Caco-2 (cell line): ENCODE measurements at regions of chr11 and their contacts with region 1.

Region 1: DNA sequence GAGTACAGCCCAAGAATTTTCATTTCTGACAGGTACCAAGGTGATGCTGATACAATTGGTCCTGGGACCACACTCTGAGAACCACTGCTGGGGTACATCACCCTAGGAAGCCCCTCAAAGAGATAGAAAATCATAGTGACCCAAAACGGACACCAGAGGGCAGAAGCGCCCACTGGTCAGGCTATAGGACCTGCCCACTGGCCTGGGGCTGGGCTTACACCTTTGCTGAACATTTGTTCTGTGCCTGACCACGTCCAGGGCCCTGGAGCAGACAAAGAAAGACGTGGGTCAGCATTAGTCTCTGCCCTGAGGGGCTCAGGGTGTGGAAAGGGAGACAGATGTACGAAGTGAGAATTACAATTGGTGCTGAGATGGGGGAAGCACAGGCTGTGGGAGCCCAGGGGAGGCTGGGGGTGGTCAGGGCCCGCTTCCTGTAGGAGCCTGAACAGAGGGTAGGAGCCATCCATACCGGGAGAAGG is 14.4 kb upstream of the SERPINH1 start:
- DNase-seq: peak; percentile 89 to 90
- H3K4me3 ChIP-seq: no peak overlapping the region
- H3K4me3 Mint-ChIP-seq: no peak overlapping the region
- H3K27ac Mint-ChIP-seq: peak overlapping the region; percentile 82
- H3K4me1 ChIP-seq: peaks cover 7% of the 10 kb centered on the region
- H3K4me1 Mint-ChIP-seq: peaks cover 16% of the 10 kb centered on the region
- H3K27me3 ChIP-seq: no peaks in the 10 kb centered on the region
- H3K27me3 Mint-ChIP-seq: no peaks in the 10 kb centered on the region
- CTCF ChIP-seq: peak; percentile 96 to 99

Region 2: DNA sequence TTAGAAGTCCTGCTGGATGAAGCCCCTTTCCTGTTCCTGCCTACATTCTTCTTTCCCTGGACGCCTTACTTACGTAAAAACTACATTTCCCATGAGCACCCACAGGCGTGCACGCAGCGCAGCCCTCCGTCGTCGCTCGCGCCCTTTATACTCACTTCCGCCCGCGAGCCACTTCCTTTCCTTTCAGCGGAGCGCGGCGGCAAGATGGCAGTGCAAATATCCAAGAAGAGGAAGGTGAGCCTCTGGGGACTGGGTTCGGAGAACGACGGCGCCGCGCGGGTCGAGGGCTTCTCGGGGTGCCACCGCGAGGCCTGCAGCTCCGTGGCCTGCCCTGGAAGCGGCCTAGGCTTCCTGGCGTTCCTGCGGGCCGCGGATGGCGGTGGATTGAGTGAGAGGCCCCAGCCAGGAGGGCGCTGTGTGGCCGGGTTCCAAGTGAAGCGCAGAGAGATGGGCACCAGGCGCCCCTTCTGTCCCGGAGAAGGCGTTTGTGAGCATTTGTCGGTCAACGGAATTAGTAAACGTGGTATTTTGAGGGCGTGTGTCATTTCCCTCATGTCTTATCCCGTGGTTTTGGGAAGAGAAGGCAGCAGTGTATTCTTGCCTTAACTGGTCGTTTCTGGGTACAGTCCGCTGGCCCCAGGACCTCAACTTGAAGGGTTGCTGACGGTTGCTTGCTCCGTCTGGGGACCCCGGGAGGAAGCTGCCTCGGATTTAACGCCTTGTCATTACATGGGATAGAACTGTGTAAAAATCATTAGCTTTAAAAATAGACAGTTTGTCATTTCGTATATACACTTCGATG is 148.1 kb before region 1 on chr11 and contains the start of gene RPS3:
- CTCF ChIA-PET with region 1: no interaction called
- POLR2A ChIA-PET with region 1: no interaction called
- intact Hi-C with region 1: no loop called
- DNase-seq: peak; percentile 95 to 97
- H3K4me3 ChIP-seq: peak within 1 kb of the TSS; percentile 80
- H3K4me3 Mint-ChIP-seq: peak within 1 kb of the TSS; percentile 99
- H3K27ac Mint-ChIP-seq: peak within 1 kb of the TSS; percentile 100
- H3K4me1 ChIP-seq: peaks cover 35% of the 10 kb centered on the region
- H3K4me1 Mint-ChIP-seq: peaks cover 40% of the 10 kb centered on the region
- H3K27me3 ChIP-seq: no peaks in the 10 kb centered on the region
- H3K27me3 Mint-ChIP-seq: no peaks in the 10 kb centered on the region
- CTCF ChIP-seq: peak in 1 of 2 experiments; percentile 60
- total RNA-seq, gene RPS3: 6,280 and 6,333 TPM in 2 replicates

Region 3: GRCh38 chr11:75562048-75562835 is 14.6 kb after region 1 on chr11 and contains the start of gene SERPINH1:
- CTCF ChIA-PET with region 1: interaction called, 4 read pairs
- POLR2A ChIA-PET with region 1: interaction called, 4 read pairs
- intact Hi-C with region 1: loop called (anchors 1 kb)
- DNase-seq: peak; percentile 92
- H3K4me3 ChIP-seq: peak within 1 kb of the TSS; percentile 51
- H3K4me3 Mint-ChIP-seq: peak within 1 kb of the TSS; percentile 93
- H3K27ac Mint-ChIP-seq: peak within 1 kb of the TSS; percentile 95
- H3K4me1 ChIP-seq: peaks cover 71% of the 10 kb centered on the region
- H3K4me1 Mint-ChIP-seq: peaks cover 44% of the 10 kb centered on the region
- H3K27me3 ChIP-seq: no peaks in the 10 kb centered on the region
- H3K27me3 Mint-ChIP-seq: no peaks in the 10 kb centered on the region
- CTCF ChIP-seq: no peak
- total RNA-seq, gene SERPINH1: 481 and 528 TPM in 2 replicates

Region 4: DNA sequence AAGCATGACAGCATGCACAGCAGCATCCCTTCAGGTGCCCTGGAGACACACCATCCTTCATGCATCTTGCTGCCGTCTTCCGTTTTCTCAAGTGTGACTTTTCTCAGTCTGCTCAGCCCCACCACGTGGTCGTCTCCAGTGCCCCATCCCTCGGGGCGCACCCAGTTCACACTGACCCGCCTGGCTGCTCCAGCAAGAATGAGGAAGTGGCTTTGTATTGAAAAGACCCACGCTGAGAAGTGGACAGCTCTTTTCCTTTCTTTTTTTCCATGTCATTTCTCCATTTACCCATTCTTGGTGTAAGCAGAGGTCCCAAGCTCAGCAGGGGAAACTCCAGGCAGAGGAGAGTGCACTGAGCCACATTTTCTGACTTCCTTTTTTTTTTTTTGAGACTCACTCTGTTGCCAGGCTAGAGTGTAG is 28.9 kb after region 1 on chr11:
- CTCF ChIA-PET with region 1: interaction called, 5 read pairs
- POLR2A ChIA-PET with region 1: no interaction called
- intact Hi-C with region 1: loop called (anchors 1 kb)
- DNase-seq: peak; percentile 81 to 89
- H3K4me3 ChIP-seq: no peak overlapping the region
- H3K4me3 Mint-ChIP-seq: peak overlapping the region; percentile 6
- H3K27ac Mint-ChIP-seq: peak overlapping the region; percentile 57
- H3K4me1 ChIP-seq: peaks cover 10% of the 10 kb centered on the region
- H3K4me1 Mint-ChIP-seq: peaks cover 15% of the 10 kb centered on the region
- H3K27me3 ChIP-seq: no peaks in the 10 kb centered on the region
- H3K27me3 Mint-ChIP-seq: no peaks in the 10 kb centered on the region
- CTCF ChIP-seq: no peak

Region 5: GRCh38 chr11:75642402-75643113 is 94.9 kb after region 1 on chr11:
- CTCF ChIA-PET with region 1: no interaction called
- POLR2A ChIA-PET with region 1: no interaction called
- intact Hi-C with region 1: loop called (anchors 5 kb)
- DNase-seq: no peak
- H3K4me3 ChIP-seq: no peak overlapping the region
- H3K4me3 Mint-ChIP-seq: no peak overlapping the region
- H3K27ac Mint-ChIP-seq: no peak overlapping the region
- H3K4me1 ChIP-seq: peaks cover 62% of the 10 kb centered on the region
- H3K4me1 Mint-ChIP-seq: peaks cover 48% of the 10 kb centered on the region
- H3K27me3 ChIP-seq: no peaks in the 10 kb centered on the region
- H3K27me3 Mint-ChIP-seq: no peaks in the 10 kb centered on the region
- CTCF ChIP-seq: no peak

Region 6: DNA sequence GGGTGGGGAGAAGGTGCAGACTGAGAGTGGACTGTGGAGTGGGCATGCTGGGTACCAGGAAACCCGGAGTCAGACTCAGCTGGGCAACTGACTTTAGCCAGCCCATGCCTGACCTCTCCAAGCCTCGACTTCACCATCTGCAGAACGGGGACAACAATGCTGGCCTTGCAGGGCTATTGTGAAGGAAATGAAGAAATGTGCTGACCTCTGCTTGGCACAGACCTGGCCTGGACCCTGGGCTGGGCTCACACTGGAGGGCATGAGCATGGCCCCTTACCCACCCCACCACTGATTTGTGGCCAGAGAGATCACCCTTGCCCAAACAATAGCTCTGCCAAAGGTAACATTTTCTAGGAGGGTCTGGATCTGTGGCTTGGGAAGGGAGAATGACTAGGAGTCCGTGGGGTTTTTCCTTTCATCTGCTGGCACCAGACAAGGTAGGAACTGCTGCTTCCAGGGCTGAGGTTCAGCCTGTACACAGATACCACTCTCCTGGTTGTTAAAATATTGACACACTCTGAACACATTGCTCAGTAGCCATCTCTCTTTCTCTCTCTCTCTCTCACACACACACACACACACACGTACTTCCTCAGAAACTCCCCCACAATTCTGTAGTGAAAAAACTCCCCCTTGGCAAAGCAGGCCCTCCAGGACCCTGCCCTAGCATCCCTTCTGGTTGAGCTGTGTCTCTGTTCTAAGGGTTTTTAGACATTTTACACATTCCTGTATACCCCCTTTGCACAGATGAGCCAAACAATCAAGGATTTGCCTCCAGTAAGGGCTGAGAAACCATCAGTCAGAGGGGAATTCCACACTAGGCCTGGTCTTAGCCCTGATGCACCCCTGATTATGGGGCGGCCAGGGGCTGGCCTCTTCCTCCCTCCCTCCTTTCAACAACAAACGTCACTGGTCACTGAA is 171.1 kb after region 1 on chr11:
- CTCF ChIA-PET with region 1: no interaction called
- POLR2A ChIA-PET with region 1: no interaction called
- intact Hi-C with region 1: loop called (anchors 1 kb)
- DNase-seq: no peak
- H3K4me3 ChIP-seq: no peak overlapping the region
- H3K4me3 Mint-ChIP-seq: no peak overlapping the region
- H3K27ac Mint-ChIP-seq: peak overlapping the region; percentile 65
- H3K4me1 ChIP-seq: peaks cover 28% of the 10 kb centered on the region
- H3K4me1 Mint-ChIP-seq: peaks cover 18% of the 10 kb centered on the region
- H3K27me3 ChIP-seq: no peaks in the 10 kb centered on the region
- H3K27me3 Mint-ChIP-seq: no peaks in the 10 kb centered on the region
- CTCF ChIP-seq: no peak

Region 7: GRCh38 chr11:75867775-75868374 is 320.3 kb after region 1 on chr11:
- CTCF ChIA-PET with region 1: no interaction called
- POLR2A ChIA-PET with region 1: no interaction called
- intact Hi-C with region 1: loop called (anchors 2 kb)
- DNase-seq: peak in 1 of 2 experiments; percentile 73
- H3K4me3 ChIP-seq: no peak overlapping the region
- H3K4me3 Mint-ChIP-seq: no peak overlapping the region
- H3K27ac Mint-ChIP-seq: peak overlapping the region; percentile 30
- H3K4me1 ChIP-seq: peaks cover 14% of the 10 kb centered on the region
- H3K4me1 Mint-ChIP-seq: peaks cover 10% of the 10 kb centered on the region
- H3K27me3 ChIP-seq: no peaks in the 10 kb centered on the region
- H3K27me3 Mint-ChIP-seq: no peaks in the 10 kb centered on the region
- CTCF ChIP-seq: peak; percentile 89 to 90